ENCODE measurements at regions of chrX and their contacts with region 1.

Region 1: GRCh38 chrX:133698298-133698697 is 283.0 kb upstream of the GPC4 start:
- DNase-seq: peak; percentile 28
- ATAC-seq: peak; percentile 54
- H3K4me3 ChIP-seq: no peak overlapping the region
- H3K27ac ChIP-seq: no peak overlapping the region
- H3K4me1 ChIP-seq: no peaks in the 10 kb centered on the region
- H3K27me3 ChIP-seq: peaks cover 13% of the 10 kb centered on the region
- CTCF ChIP-seq: peak; percentile 47
- POLR2A ChIP-seq: no peak
- RAD21 ChIP-seq: peak; percentile 52

Region 2: GRCh38 chrX:133776072-133776471 is 77.8 kb after region 1 on chrX:
- CTCF ChIA-PET with region 1: interaction called, 5 read pairs
- POLR2A ChIA-PET with region 1: no interaction called
- dilution Hi-C with region 1: no loop called
- in situ Hi-C with region 1: no loop called
- intact Hi-C with region 1: loop called (anchors 1 kb)
- DNase-seq: no peak
- ATAC-seq: no peak
- H3K4me3 ChIP-seq: no peak overlapping the region
- H3K27ac ChIP-seq: no peak overlapping the region
- H3K4me1 ChIP-seq: no peaks in the 10 kb centered on the region
- H3K27me3 ChIP-seq: peaks cover 8% of the 10 kb centered on the region
- CTCF ChIP-seq: peak; percentile 39
- POLR2A ChIP-seq: no peak
- RAD21 ChIP-seq: no peak

Region 3: DNA sequence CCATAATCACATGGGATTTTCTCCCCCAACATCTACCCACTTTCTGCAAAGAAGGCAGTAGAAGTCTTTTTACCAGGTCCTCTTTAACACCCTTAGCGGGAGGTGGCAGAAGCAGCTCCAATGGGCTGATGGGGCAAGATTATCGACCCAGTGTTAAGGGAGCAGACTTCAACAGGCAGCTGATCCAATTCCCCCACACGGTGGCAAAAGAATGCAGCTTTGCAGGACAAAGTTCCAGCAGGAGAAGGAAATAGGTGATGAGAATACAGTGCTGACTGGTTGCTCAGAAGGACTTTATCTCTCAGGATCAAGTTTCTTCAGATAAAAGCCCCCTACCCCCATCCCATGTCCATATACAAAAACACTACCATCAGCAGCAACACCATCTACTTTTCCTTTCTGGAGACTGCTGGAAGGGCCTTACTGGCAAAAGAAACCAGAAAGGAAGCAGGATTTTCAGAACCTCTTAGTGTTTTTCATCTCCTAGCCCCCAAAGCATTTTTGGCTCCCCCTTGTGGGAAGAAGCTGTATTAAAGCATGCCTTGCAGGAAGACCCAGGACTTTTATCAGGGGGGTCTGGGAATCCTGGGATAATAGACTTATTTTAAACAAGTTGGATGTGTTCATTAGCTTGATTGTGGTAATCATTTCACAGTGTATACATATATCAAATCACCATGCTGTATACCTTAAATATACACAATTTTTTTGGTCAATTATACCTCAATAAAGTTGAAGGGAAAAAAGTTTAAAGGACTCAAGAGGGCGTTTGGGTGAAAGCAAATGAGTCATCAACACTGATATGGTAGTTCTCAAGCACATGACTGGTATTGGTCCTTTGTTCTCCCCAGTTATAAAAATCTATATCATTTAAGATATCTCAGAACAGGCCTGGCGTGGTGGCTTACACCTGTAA is 140.7 kb after region 1 on chrX:
- CTCF ChIA-PET with region 1: no interaction called
- POLR2A ChIA-PET with region 1: no interaction called
- dilution Hi-C with region 1: no loop called
- in situ Hi-C with region 1: no loop called
- intact Hi-C with region 1: loop called (anchors 2 kb)
- DNase-seq: peak; percentile 28
- ATAC-seq: peak; percentile 57; the same call in 1 of the 2 replicates
- H3K4me3 ChIP-seq: no peak overlapping the region
- H3K27ac ChIP-seq: no peak overlapping the region
- H3K4me1 ChIP-seq: no peaks in the 10 kb centered on the region
- H3K27me3 ChIP-seq: peaks cover 6% of the 10 kb centered on the region
- CTCF ChIP-seq: peak; percentile 55
- POLR2A ChIP-seq: no peak
- RAD21 ChIP-seq: peak; percentile 22; the same call in 1 of the 2 replicates

Region 4: DNA sequence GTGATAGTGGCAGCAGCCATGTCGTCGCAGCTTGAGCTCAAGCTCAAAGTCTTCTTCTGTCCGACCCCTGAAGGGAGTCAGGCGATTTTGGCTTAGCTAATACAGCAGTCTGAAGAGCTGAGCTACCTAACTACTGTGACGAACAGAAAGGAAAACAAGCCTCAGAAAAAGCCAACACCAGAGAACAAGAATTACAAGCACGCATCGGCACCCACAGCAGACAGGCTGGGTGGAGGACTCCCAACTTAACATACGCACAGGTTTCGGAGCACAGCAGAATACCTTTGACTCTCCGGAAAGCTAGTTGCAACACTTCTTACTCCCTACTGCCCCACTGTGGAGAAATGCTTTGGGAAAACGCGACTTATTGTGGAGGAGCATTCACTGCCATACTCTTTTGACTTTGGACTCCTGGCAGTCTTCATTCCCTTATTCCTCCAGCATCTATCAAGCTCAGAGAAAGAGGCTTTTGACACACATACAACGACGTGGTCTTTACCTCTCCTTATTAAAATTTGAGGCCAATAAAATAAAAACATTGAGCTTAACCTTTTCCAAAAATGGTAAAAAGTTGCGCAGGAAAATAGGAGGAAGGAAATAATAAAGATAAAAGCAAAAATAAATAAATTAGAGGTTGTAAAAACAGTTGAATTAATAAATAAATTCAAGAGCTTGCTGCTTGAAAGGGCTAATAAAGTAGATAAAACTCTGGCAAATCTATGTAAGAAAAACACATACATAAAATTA is 328.4 kb after region 1 on chrX:
- CTCF ChIA-PET with region 1: no interaction called
- POLR2A ChIA-PET with region 1: no interaction called
- dilution Hi-C with region 1: no loop called
- in situ Hi-C with region 1: no loop called
- intact Hi-C with region 1: loop called (anchors 10 kb)
- DNase-seq: peak; percentile 5
- ATAC-seq: 0 out of 2 replicates have a peak, but pooled peaks have one; percentile 51
- H3K4me3 ChIP-seq: no peak overlapping the region
- H3K27ac ChIP-seq: no peak overlapping the region
- H3K4me1 ChIP-seq: no peaks in the 10 kb centered on the region
- H3K27me3 ChIP-seq: no peaks in the 10 kb centered on the region
- CTCF ChIP-seq: peak; percentile 27; the same call in 1 of the 2 replicates
- POLR2A ChIP-seq: no peak
- RAD21 ChIP-seq: no peak